ENCODE measurements at regions of chr6 and their contacts with region 1.

Region 1: GRCh38 chr6:34696739-34697543 is at the start of gene ILRUN:
- H3K4me3 Mint-ChIP-seq: peak within 1 kb of the TSS; percentile 89
- H3K27ac Mint-ChIP-seq: peak within 1 kb of the TSS; percentile 92
- H3K4me1 Mint-ChIP-seq: peaks cover 32% of the 10 kb centered on the region
- H3K27me3 Mint-ChIP-seq: no peaks in the 10 kb centered on the region

Region 2: GRCh38 chr6:34341481-34341971 is 355.4 kb before region 1 on chr6:
- intact Hi-C with region 1: no loop called
- H3K4me3 Mint-ChIP-seq: no peak overlapping the region
- H3K27ac Mint-ChIP-seq: peak overlapping the region; percentile 19
- H3K4me1 Mint-ChIP-seq: peaks cover 78% of the 10 kb centered on the region
- H3K27me3 Mint-ChIP-seq: no peaks in the 10 kb centered on the region

Region 3: DNA sequence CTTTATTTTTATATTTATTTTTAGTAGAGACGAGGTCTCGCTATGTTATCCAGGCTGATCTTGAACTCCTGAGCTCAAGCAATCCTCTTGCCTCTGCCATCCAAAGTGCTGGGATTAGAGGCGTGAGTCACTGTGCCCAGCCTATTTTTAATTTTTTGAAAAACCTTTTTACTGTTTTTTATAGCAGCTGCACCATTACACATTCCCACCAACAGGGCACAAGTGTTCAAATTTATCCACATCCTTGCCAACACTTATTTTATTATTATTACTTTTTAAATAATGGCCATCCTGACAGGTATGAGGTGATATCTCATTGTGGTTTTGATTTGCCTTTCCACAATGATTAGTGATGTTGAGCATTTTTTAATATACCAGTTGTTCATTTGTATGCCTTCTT is 188.5 kb before region 1 on chr6:
- intact Hi-C with region 1: no loop called
- H3K4me3 Mint-ChIP-seq: no peak overlapping the region
- H3K27ac Mint-ChIP-seq: no peak overlapping the region
- H3K4me1 Mint-ChIP-seq: no peaks in the 10 kb centered on the region
- H3K27me3 Mint-ChIP-seq: peaks cover 3% of the 10 kb centered on the region

Region 4: DNA sequence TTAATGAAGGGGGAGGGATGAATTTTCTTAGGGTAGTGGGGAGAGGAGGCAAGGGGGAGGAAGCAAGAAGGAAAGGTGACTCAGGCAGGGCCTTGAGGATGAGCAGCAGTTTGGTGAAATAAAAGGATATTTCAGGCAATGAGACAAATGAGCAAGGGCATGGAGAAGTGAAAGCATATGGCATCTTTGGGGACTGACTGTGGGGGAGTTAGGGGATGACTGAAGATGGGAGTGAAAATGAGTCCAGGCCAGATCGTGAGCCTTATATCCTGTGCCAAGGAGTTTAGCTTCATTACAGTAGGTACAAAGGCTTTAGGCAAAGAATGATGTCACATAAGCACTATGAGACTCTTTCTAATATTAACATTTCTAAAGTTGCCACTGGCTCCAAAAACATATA is 52.2 kb before region 1 on chr6:
- intact Hi-C with region 1: loop called (anchors 10 kb)
- H3K4me3 Mint-ChIP-seq: no peak overlapping the region
- H3K27ac Mint-ChIP-seq: peak overlapping the region; percentile 9
- H3K4me1 Mint-ChIP-seq: peaks cover 18% of the 10 kb centered on the region
- H3K27me3 Mint-ChIP-seq: no peaks in the 10 kb centered on the region

Region 5: GRCh38 chr6:34664256-34664971 is 32.5 kb before region 1 on chr6:
- intact Hi-C with region 1: loop called (anchors 5 kb)
- H3K4me3 Mint-ChIP-seq: peak overlapping the region; percentile 9
- H3K27ac Mint-ChIP-seq: peak overlapping the region; percentile 87
- H3K4me1 Mint-ChIP-seq: peaks cover 74% of the 10 kb centered on the region
- H3K27me3 Mint-ChIP-seq: no peaks in the 10 kb centered on the region